ENCODE measurements at regions of chr2 and their contacts with region 1.

Region 1: GRCh38 chr2:121400201-121400600 is 115.2 kb upstream of the TFCP2L1 start:
- DNase-seq: no peak
- ATAC-seq: peak in 1 of 2 donors; percentile 23
- H3K4me3 ChIP-seq: no peak overlapping the region
- H3K27ac ChIP-seq: no peak overlapping the region
- H3K4me1 ChIP-seq: no peaks in the 10 kb centered on the region
- H3K27me3 ChIP-seq: no peaks in the 10 kb centered on the region

Region 2: DNA sequence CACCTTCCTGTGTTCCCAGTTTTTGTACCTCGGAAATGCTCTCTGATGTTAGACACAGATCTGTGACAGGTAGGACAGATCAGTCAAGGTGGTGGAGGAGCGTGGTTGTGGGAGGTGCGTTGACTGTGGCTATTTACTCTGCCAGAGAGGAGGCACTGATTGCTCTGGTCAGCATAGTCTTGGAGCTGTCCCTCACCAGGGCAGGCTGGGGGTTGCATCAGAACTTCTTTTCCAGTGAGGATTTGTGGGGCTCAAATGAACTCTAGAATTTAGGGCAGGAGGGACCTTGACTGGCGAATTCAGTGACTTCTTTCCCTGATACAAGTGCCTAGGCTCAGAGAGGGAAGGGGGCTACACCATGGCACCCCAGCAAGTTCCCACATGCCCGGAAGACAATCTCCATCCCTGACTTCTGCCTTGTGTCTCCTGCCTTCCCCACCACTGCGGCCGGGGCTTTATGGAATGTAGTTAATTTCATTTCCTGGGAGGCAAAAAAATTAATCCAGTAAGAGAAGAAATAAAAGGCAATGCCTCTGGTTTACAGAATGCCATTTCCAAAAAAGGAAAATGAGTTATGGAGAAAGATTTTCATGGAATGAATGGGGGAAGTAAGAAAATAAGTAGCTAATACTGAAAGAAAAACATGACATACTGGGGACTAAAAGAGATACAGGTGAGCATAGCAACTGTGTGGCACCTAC is 310.4 kb after region 1 on chr2:
- intact Hi-C with region 1: loop called in 3 of 4 experiments (anchors 5 to 10 kb)
- DNase-seq: no peak
- ATAC-seq: no peak
- H3K4me3 ChIP-seq: no peak overlapping the region
- H3K27ac ChIP-seq: no peak overlapping the region
- H3K4me1 ChIP-seq: no peaks in the 10 kb centered on the region
- H3K27me3 ChIP-seq: no peaks in the 10 kb centered on the region

Region 3: GRCh38 chr2:121722479-121722878 is 322.3 kb after region 1 on chr2:
- intact Hi-C with region 1: loop called (anchors 2 to 10 kb)
- DNase-seq: no peak
- ATAC-seq: peak in 1 of 2 donors; percentile 55
- H3K4me3 ChIP-seq: no peak overlapping the region
- H3K27ac ChIP-seq: no peak overlapping the region
- H3K4me1 ChIP-seq: no peaks in the 10 kb centered on the region
- H3K27me3 ChIP-seq: no peaks in the 10 kb centered on the region

Measured in right cardiac atrium (tissue), 5 donors.